ENCODE measurements at regions of chr20 and their contacts with region 1.

Region 1: DNA sequence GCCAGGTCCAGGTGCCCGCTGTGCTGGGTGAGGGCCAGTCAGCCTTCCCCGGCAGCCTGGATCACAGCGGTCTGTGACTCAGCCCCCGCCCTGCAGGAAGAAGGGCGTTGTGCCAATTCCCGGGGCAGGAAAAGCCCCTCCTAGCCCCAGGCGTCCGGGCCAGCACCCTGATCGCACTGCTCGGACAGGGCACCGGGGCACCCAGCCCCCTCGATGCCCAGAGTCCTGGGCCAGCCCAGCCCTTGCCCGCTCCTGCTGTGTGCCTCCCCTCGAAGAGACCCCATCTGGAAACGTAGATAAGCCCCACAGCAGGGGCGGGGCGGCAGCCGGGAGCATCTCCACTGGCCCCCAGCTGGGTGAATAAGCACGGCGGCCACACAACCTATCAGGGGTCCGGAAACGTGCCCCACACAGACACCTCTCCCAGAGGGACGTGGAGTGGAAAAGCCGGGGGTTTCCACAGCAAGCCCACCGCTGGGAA is 9.9 kb downstream of the LAMA5 start:
- DNase-seq: no peak
- H3K4me3 ChIP-seq: no peak overlapping the region
- H3K27ac ChIP-seq: no peak overlapping the region
- H3K4me1 ChIP-seq: peaks cover 3 to 59% (median 46%) of the 10 kb centered on the region in 4 experiments
- H3K27me3 ChIP-seq: no peaks in the 10 kb centered on the region
- CTCF ChIP-seq: no peak
- EP300 ChIP-seq: no peak
- POLR2A ChIP-seq: no peak
- RAD21 ChIP-seq: no peak

Region 2: GRCh38 chr20:62274332-62274950 is 82.8 kb before region 1 on chr20:
- CTCF ChIA-PET with region 1: no interaction called
- POLR2A ChIA-PET with region 1: no interaction called
- DNase-seq: no peak
- H3K4me3 ChIP-seq: no peak overlapping the region
- H3K27ac ChIP-seq: no peak overlapping the region
- H3K4me1 ChIP-seq: no peaks in the 10 kb centered on the region
- H3K27me3 ChIP-seq: no peaks in the 10 kb centered on the region
- CTCF ChIP-seq: no peak
- EP300 ChIP-seq: no peak
- POLR2A ChIP-seq: no peak
- RAD21 ChIP-seq: no peak

Region 3: DNA sequence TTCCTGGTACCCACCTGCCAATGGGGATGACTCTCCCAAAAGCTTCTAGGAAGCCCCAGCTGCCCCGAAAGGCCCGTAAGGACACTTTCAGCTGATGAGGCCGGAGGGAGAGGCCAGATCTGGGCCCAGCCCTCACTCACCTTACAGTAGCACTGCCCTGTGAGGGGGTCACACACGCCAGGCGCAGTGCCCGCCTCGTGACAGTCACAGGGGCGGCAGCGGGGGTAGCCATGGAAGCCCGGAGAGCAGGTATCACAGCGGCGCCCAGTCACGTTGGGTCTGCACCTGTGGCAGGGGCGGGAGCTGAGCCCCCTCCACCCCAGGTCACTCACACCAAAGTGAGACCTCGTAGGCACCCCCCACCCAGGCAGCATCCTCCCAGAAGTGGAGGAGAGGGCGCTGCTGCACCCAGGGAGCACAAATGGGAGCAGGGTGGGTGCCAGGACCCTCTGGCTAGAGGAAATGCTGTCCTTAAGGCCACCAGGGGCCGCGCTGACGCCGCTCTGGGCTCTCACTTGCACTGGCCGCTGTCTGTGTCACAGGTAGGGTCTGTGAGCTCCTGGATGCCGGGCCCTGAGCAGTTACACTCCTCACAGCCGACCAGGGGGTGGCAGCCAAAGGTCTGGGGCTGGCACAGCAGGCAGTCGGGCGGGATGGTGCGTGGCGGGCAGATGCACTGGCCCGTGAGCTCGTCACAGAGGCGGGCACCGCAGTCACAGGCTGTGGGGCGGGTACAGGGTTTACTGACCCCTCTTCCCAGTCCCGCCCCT is 29.3 kb before region 1 on chr20:
- CTCF ChIA-PET with region 1: interaction called, 3 read pairs
- POLR2A ChIA-PET with region 1: interaction called, 95 read pairs
- DNase-seq: no peak
- H3K4me3 ChIP-seq: no peak overlapping the region
- H3K27ac ChIP-seq: no peak overlapping the region
- H3K4me1 ChIP-seq: no peaks in the 10 kb centered on the region
- H3K27me3 ChIP-seq: no peaks in the 10 kb centered on the region
- CTCF ChIP-seq: peak in 1 of 3 experiments; percentile 13; a peak in 1 of 4 replicates
- EP300 ChIP-seq: no peak
- POLR2A ChIP-seq: no peak
- RAD21 ChIP-seq: peak in 1 of 2 experiments; percentile 20; a peak in 1 of 4 replicates

Measured in H1 (cell line).